Activated T-helper 2 cell treated with anti-CD3 and anti-CD28 coated beads, Interferon-gamma antibody, Interleukin-2, Interleukin-4, amounts not matched to agents 10 μg/mL and 5 μg/mL and 100 μg/mL, durations not matched to agents 14 hours and 24 hours and 36 hours (primary cell): ENCODE measurements at regions of chr14 and their contacts with region 1.

Region 1: GRCh38 chr14:98512501-98513251 is 759.3 kb downstream of the BCL11B start:
- DNase-seq: no peak
- H3K4me3 Mint-ChIP-seq: no peak overlapping the region
- H3K27ac Mint-ChIP-seq: no peak overlapping the region
- H3K4me1 Mint-ChIP-seq: peaks cover 34% of the 10 kb centered on the region
- H3K27me3 Mint-ChIP-seq: no peaks in the 10 kb centered on the region

Region 2: GRCh38 chr14:98144964-98145363 is 367.7 kb before region 1 on chr14:
- intact Hi-C with region 1: loop called (anchors 10 kb)
- DNase-seq: no peak
- H3K4me3 Mint-ChIP-seq: no peak overlapping the region
- H3K27ac Mint-ChIP-seq: no peak overlapping the region
- H3K4me1 Mint-ChIP-seq: peaks cover 38% of the 10 kb centered on the region
- H3K27me3 Mint-ChIP-seq: no peaks in the 10 kb centered on the region